ENCODE measurements at regions of chr12 and their contacts with region 1.

Region 1: GRCh38 chr12:107105410-107105703 is 12.0 kb upstream of the CRY1 start:
- DNase-seq: no peak
- ATAC-seq: no peak
- H3K4me3 Mint-ChIP-seq: no peak overlapping the region
- H3K27ac Mint-ChIP-seq: no peak overlapping the region
- H3K4me1 Mint-ChIP-seq: peaks cover 5% of the 10 kb centered on the region
- H3K27me3 Mint-ChIP-seq: peaks cover 7% of the 10 kb centered on the region

Region 2: DNA sequence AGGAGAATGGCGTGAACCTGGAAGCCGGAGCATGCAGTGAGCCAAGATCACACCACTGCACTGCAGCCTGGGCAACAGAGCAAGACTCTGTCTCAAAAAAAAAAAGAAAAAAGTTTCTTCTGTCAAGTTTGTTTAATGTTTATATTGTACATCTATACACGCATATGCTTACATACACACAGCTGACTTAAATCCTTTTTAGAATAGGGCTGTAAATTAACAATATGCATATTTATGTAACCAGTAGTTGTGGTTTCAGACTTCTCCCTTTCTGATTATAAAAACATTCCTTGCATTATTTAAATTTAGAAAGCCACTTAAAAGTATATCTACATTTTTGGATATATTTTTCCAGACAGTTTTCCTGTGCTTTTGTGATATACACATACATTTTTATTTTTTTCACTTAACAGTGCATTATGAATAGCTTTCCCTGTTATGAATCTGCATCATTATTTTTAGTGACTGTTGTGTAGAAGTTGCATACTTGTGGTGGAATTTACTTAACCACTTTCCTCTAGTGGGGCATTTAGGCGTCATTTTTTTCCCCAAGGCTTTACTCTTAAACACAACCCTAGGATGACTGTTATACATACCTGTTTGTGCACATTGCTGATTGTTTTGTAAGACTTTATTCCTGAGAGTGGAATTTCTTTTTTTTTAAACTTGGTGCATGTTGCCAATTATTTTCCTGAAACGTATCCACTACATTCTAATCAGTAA is 718.4 kb before region 1 on chr12:
- CTCF ChIA-PET with region 1: no interaction called
- POLR2A ChIA-PET with region 1: no interaction called
- intact Hi-C with region 1: loop called (anchors 2 to 5 kb)
- DNase-seq: no peak
- ATAC-seq: no peak
- H3K4me3 Mint-ChIP-seq: no peak overlapping the region
- H3K27ac Mint-ChIP-seq: no peak overlapping the region
- H3K4me1 Mint-ChIP-seq: no peaks in the 10 kb centered on the region
- H3K27me3 Mint-ChIP-seq: no peaks in the 10 kb centered on the region

Region 3: DNA sequence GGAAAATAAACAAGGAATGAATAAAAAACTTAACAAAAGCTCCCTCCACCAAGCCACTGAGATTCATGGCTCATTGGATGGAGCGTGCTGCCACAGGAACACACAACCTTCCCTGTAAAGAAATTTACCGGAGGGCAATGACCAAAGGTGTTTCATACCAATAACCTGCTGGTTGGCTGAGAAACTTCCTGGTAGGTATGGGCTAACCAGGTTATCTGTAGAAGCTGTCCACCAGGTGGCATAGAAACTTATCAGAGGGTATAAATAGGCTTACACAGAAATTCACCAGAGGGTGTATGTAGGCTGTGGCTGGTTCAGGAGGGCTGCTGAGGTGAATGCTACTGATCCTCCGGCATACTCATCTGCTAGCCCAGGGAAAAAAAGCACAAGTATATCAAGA is 91.3 kb before region 1 on chr12:
- CTCF ChIA-PET with region 1: no interaction called
- POLR2A ChIA-PET with region 1: no interaction called
- intact Hi-C with region 1: loop called in 1 of 2 experiments (anchors 1 kb)
- DNase-seq: no peak
- ATAC-seq: no peak
- H3K4me3 Mint-ChIP-seq: no peak overlapping the region
- H3K27ac Mint-ChIP-seq: no peak overlapping the region
- H3K4me1 Mint-ChIP-seq: no peaks in the 10 kb centered on the region
- H3K27me3 Mint-ChIP-seq: no peaks in the 10 kb centered on the region

Region 4: DNA sequence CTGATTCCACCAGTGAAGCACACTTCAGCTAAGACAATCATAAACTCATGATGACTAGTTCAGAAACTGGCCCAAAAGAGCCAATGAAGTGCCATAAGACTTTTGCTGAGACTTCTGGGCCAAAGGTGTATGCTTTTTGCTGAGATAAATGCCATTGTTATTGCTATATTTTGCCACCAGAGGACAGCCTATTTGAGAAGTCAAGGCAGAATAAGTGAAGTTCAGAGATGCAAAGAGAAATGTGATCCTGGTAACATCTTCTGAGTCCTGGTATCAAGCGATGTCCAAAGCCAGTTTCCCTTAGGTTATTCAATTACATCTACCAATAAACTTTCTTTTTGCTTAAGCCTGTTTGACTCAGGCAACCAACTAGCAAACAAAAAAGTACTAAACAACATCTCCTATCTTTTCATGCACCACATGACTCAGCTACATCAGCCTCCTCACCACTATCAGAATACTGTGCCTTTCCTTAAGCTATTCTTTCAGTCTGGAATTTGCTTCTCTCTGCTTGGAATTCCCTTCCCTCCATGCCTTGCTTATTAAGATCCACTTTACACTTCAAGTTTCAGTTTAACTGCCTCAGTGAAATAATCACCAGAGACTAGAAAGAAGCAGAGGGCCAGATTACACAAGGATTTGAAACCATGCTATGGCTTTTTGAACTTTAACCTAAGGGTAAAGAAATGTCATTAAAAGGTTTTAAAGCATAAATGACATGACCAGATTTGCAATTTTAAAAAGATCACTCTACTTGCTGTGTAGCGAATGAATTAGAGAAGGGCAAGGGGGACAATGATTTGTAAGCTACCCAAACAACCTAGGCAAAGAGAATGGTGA is 26.0 kb before region 1 on chr12:
- CTCF ChIA-PET with region 1: interaction called, 10 read pairs
- POLR2A ChIA-PET with region 1: no interaction called
- intact Hi-C with region 1: no loop called
- DNase-seq: peak; percentile 13
- ATAC-seq: peak; percentile 96
- H3K4me3 Mint-ChIP-seq: no peak overlapping the region
- H3K27ac Mint-ChIP-seq: no peak overlapping the region
- H3K4me1 Mint-ChIP-seq: peaks cover 12% of the 10 kb centered on the region
- H3K27me3 Mint-ChIP-seq: no peaks in the 10 kb centered on the region